ENCODE measurements at regions of chr11 and their contacts with region 1.

Region 1: GRCh38 chr11:36376888-36377758 is 81.0 kb downstream of the PRR5L start:
- DNase-seq: peak; percentile 79
- ATAC-seq: peak; percentile 74
- H3K4me3 Mint-ChIP-seq: peak overlapping the region; percentile 92
- H3K27ac Mint-ChIP-seq: peak overlapping the region; percentile 84
- H3K4me1 Mint-ChIP-seq: peaks cover 33% of the 10 kb centered on the region
- H3K27me3 Mint-ChIP-seq: peaks cover 38% of the 10 kb centered on the region

Region 2: GRCh38 chr11:36233204-36233603 is 143.9 kb before region 1 on chr11:
- CTCF ChIA-PET with region 1: no interaction called
- POLR2A ChIA-PET with region 1: no interaction called
- intact Hi-C with region 1: no loop called
- DNase-seq: no peak
- ATAC-seq: no peak
- H3K4me3 Mint-ChIP-seq: no peak overlapping the region
- H3K27ac Mint-ChIP-seq: no peak overlapping the region
- H3K4me1 Mint-ChIP-seq: no peaks in the 10 kb centered on the region
- H3K27me3 Mint-ChIP-seq: peaks cover 10% of the 10 kb centered on the region

Region 3: GRCh38 chr11:36390963-36391471 is 13.9 kb after region 1 on chr11:
- CTCF ChIA-PET with region 1: interaction called, 8 read pairs
- POLR2A ChIA-PET with region 1: no interaction called
- intact Hi-C with region 1: loop called in 1 of 2 experiments (anchors 2 kb)
- DNase-seq: peak; percentile 61
- ATAC-seq: peak; percentile 58
- H3K4me3 Mint-ChIP-seq: no peak overlapping the region
- H3K27ac Mint-ChIP-seq: peak overlapping the region; percentile 58
- H3K4me1 Mint-ChIP-seq: peaks cover 57% of the 10 kb centered on the region
- H3K27me3 Mint-ChIP-seq: no peaks in the 10 kb centered on the region

Region 4: GRCh38 chr11:36421546-36422155 is 44.5 kb after region 1 on chr11:
- CTCF ChIA-PET with region 1: interaction called, 4 read pairs
- POLR2A ChIA-PET with region 1: no interaction called
- intact Hi-C with region 1: loop called in 1 of 2 experiments (anchors 5 kb)
- DNase-seq: no peak
- ATAC-seq: no peak
- H3K4me3 Mint-ChIP-seq: peak overlapping the region; percentile 41
- H3K27ac Mint-ChIP-seq: peak overlapping the region; percentile 94
- H3K4me1 Mint-ChIP-seq: peaks cover 54% of the 10 kb centered on the region
- H3K27me3 Mint-ChIP-seq: peaks cover 7% of the 10 kb centered on the region

Region 5: GRCh38 chr11:36469063-36469462 is 91.9 kb after region 1 on chr11:
- CTCF ChIA-PET with region 1: no interaction called
- POLR2A ChIA-PET with region 1: interaction called, 4 read pairs
- intact Hi-C with region 1: loop called in 1 of 2 experiments (anchors 5 kb)
- DNase-seq: peak; percentile 63
- ATAC-seq: peak; percentile 25
- H3K4me3 Mint-ChIP-seq: no peak overlapping the region
- H3K27ac Mint-ChIP-seq: no peak overlapping the region
- H3K4me1 Mint-ChIP-seq: no peaks in the 10 kb centered on the region
- H3K27me3 Mint-ChIP-seq: no peaks in the 10 kb centered on the region

Region 6: DNA sequence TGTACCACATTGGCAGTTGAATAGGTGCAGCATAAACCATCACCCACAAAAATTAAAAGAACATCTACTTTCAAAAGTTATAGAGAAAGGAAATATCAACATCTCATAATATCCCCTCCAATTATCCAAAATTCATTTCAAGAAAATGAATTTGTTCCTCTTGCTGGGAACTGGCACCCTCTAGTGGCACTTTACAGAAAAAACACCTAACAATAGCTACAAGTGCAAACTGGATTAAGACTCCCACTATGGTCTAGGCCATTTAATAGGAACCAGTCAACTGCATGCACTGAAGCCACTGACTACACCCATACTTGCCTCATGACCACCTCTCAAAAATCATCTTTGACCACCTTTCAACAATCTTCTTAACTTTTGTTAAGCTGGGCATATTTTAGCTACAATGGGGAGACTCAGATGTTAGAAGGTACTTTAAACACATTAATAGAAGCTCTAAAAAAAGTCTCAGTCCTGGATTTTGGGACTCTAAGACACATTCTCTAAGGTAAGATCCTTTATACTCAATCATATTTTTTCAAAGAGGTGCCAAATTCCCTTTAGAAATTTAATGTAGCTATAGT is 115.7 kb after region 1 on chr11:
- CTCF ChIA-PET with region 1: interaction called, 5 read pairs
- POLR2A ChIA-PET with region 1: no interaction called
- intact Hi-C with region 1: loop called in 1 of 2 experiments (anchors 5 kb)
- DNase-seq: peak; percentile 41
- ATAC-seq: peak; percentile 74
- H3K4me3 Mint-ChIP-seq: no peak overlapping the region
- H3K27ac Mint-ChIP-seq: peak overlapping the region; percentile 24
- H3K4me1 Mint-ChIP-seq: peaks cover 23% of the 10 kb centered on the region
- H3K27me3 Mint-ChIP-seq: no peaks in the 10 kb centered on the region

Measured in activated CD4-positive, alpha-beta T cell treated with anti-CD3 and anti-CD28 coated beads for 36 hours (primary cell).